Panc1 (cell line): ENCODE measurements at regions of chr12 and their contacts with region 1.

Region 1: GRCh38 chr12:120421701-120422100 is 16.2 kb upstream of the COX6A1 start:
- DNase-seq: no peak
- ATAC-seq: no peak
- H3K4me3 ChIP-seq: no peak overlapping the region
- H3K27ac ChIP-seq: no peak overlapping the region
- H3K4me1 ChIP-seq: no peaks in the 10 kb centered on the region
- H3K27me3 ChIP-seq: no peaks in the 10 kb centered on the region
- CTCF ChIP-seq: no peak

Region 2: DNA sequence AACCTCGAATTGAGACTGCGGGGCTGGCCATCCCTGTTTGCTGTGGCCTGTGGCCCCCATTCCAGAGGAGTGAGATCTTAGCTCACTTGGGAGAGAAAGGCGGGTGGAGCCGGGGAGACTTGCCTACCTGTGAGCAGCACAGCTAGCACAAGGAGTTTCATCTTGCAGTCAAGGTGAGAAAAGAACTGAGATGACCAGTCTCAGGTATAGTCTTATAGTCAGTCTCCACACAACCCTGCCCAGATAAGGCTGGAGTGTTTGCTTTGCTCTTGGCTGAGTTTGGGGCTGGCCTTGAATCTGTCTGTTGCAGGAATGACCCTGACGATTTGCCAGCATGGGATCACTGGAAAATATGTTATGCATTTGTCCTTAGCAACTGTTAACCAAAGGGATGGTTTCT is 94.1 kb before region 1 on chr12 and contains the start of gene PLA2G1B:
- CTCF ChIA-PET with region 1: interaction called, 13 read pairs
- POLR2A ChIA-PET with region 1: no interaction called
- in situ Hi-C with region 1: no loop called
- intact Hi-C with region 1: no loop called
- DNase-seq: no peak
- ATAC-seq: no peak
- H3K4me3 ChIP-seq: no peak within 1 kb of the TSS
- H3K27ac ChIP-seq: no peak within 1 kb of the TSS
- H3K4me1 ChIP-seq: 0 out of 2 replicates have a peak, but pooled peaks cover 4% of the 10 kb centered on the region
- H3K27me3 ChIP-seq: no peaks in the 10 kb centered on the region
- CTCF ChIP-seq: no peak
- total RNA-seq, gene PLA2G1B: 0.69 TPM

Region 3: DNA sequence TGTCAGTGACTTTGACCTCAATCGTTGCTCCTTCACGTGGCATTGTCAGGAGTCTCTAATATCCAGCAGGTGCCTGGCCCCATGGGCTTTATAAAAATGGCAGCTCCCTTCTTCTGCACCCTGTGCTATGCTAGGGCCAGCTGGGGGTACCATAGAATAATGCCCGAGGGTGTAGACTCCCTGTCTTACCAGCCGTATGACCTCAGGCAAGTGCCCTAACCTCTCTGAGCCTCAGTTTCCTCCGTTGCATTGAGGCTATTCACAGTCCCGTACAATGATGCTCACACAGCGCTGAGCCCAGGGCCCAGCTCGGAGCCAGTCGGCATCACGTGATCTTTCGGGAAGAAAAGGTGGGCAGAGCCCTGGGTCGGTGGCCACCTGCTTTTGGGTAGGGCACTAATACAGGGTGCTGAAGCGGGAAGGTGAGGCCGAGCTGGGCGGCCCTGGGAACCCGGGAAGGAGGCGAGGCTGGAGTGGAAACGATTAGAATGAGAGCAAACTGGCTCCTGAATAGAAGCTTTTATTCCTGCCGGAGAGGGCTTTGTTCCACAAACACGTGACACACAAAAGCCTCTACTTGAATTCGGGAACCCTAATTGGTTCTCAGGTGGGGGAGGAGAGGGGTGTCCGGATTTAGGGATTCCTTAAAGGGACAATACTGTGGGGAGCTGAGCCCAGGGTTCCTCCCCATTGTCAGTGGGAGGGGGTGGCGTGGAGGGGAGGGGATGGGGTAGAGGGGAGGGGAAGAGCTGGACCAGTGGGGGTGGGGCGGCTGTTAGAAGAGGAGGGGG is 32.8 kb before region 1 on chr12:
- CTCF ChIA-PET with region 1: no interaction called
- POLR2A ChIA-PET with region 1: interaction called, 19 read pairs
- in situ Hi-C with region 1: no loop called
- intact Hi-C with region 1: no loop called
- DNase-seq: no peak
- ATAC-seq: peak; percentile 63
- H3K4me3 ChIP-seq: peak overlapping the region in 1 of 2 experiments; percentile 18; a peak in 1 of 4 replicates
- H3K27ac ChIP-seq: no peak overlapping the region
- H3K4me1 ChIP-seq: no peaks in the 10 kb centered on the region; the same call in 1 of the 2 replicates
- H3K27me3 ChIP-seq: no peaks in the 10 kb centered on the region
- CTCF ChIP-seq: no peak

Region 4: DNA sequence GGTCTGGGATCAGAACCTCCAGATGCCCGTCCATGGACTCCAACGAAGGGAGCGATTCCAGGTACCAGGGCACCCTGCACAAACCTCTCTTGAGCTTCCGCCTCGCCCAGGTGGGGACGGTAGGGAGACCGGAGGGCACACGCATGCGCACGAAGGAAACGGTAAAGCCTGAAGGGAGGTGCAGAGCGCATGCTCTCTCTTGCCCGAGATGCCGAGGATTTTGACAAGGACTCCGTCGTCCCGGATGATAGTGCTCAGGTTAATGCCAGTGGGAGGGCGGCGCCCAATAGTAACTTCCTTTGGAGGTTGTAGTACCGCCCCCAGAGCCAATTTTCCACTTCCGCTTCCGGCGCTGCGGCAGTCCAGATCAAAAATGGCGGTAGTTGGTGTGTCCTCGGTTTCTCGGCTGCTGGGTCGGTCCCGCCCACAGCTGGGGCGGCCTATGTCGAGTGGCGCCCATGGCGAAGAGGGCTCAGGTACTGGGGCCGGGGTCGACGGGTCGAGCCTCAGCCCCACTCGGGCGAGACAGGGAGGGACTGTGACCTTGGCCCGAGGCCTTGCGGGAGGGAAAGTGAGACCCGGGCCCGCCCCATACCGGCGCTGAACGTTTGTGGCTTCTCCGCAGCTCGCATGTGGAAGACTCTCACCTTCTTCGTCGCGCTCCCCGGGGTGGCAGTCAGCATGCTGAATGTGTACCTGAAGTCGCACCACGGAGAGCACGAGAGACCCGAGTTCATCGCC is 16.2 kb after region 1 on chr12 and contains the start of gene COX6A1:
- CTCF ChIA-PET with region 1: no interaction called
- POLR2A ChIA-PET with region 1: no interaction called
- in situ Hi-C with region 1: no loop called
- intact Hi-C with region 1: no loop called
- DNase-seq: peak; percentile 95
- ATAC-seq: peak; percentile 98
- H3K4me3 ChIP-seq: peak within 1 kb of the TSS; percentile 80 to 84
- H3K27ac ChIP-seq: peak within 1 kb of the TSS; percentile 86
- H3K4me1 ChIP-seq: peaks cover 9% of the 10 kb centered on the region
- H3K27me3 ChIP-seq: no peaks in the 10 kb centered on the region
- CTCF ChIP-seq: 0 out of 2 replicates have a peak, but pooled peaks have one; percentile 20
- total RNA-seq, gene COX6A1: 557 TPM

Region 5: DNA sequence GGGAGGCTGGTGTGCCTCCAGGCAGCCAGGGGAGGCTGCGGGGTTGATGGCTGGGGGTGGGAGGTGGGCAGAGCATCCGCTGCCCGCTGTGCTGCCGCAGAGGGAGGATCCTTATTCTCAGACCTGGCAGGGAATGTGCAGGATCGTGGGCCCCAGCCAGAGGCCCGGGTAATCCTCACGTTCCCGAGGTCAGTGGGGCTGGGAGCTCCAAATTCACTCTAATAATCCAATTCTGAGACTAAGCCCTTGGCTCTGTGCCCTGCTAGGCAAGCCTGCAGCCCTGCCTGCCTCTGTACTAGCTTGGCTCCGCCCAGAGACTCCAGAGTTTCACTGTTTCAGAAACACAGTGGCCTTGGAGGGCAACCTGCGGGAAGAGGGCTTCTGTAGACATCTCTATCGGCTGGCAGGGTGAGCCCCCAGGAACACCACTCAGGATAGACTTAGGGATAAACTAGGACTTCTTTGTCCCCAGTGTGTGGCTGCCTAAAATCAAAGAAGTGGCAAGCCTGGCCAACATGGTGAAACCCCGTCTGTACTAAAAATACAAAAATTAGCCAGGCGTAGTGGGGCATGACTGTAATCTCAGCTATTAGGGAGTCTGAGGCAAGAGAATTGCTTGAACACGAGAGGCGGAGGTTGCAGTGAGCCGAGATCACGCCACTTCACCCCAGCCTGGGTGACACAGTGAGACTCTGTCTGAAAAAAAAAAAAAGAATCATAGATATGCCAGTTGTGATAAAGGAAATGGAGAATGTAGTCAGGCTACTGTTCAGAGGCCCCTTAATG is 247.5 kb after region 1 on chr12:
- CTCF ChIA-PET with region 1: no interaction called
- POLR2A ChIA-PET with region 1: interaction called, 15 read pairs
- in situ Hi-C with region 1: no loop called
- intact Hi-C with region 1: no loop called
- DNase-seq: no peak
- ATAC-seq: peak; percentile 37; the same call in 1 of the 2 replicates
- H3K4me3 ChIP-seq: no peak overlapping the region
- H3K27ac ChIP-seq: no peak overlapping the region
- H3K4me1 ChIP-seq: no peaks in the 10 kb centered on the region
- H3K27me3 ChIP-seq: no peaks in the 10 kb centered on the region
- CTCF ChIP-seq: no peak